Activated B cell treated with CpG ODN at 0.5 μM for 24 hours (primary cell): ENCODE measurements at regions of chr6 and their contacts with region 1.

Region 1: GRCh38 chr6:167826230-167826895 is 348 bp upstream of the AFDN start:
- DNase-seq: no peak
- ATAC-seq: peak; percentile 88
- H3K4me3 Mint-ChIP-seq: peak overlapping the region; percentile 88
- H3K27ac Mint-ChIP-seq: no peak overlapping the region
- H3K4me1 Mint-ChIP-seq: peaks cover 24% of the 10 kb centered on the region
- H3K27me3 Mint-ChIP-seq: peaks cover 26% of the 10 kb centered on the region
- CTCF ChIP-seq: no peak

Region 2: GRCh38 chr6:167163476-167164011 is 662.8 kb before region 1 on chr6:
- CTCF ChIA-PET with region 1: no interaction called
- POLR2A ChIA-PET with region 1: no interaction called
- intact Hi-C with region 1: loop called (anchors 5 kb)
- DNase-seq: no peak
- ATAC-seq: no peak
- H3K4me3 Mint-ChIP-seq: no peak overlapping the region
- H3K27ac Mint-ChIP-seq: no peak overlapping the region
- H3K4me1 Mint-ChIP-seq: peaks cover 3% of the 10 kb centered on the region
- H3K27me3 Mint-ChIP-seq: no peaks in the 10 kb centered on the region
- CTCF ChIP-seq: no peak

Region 3: DNA sequence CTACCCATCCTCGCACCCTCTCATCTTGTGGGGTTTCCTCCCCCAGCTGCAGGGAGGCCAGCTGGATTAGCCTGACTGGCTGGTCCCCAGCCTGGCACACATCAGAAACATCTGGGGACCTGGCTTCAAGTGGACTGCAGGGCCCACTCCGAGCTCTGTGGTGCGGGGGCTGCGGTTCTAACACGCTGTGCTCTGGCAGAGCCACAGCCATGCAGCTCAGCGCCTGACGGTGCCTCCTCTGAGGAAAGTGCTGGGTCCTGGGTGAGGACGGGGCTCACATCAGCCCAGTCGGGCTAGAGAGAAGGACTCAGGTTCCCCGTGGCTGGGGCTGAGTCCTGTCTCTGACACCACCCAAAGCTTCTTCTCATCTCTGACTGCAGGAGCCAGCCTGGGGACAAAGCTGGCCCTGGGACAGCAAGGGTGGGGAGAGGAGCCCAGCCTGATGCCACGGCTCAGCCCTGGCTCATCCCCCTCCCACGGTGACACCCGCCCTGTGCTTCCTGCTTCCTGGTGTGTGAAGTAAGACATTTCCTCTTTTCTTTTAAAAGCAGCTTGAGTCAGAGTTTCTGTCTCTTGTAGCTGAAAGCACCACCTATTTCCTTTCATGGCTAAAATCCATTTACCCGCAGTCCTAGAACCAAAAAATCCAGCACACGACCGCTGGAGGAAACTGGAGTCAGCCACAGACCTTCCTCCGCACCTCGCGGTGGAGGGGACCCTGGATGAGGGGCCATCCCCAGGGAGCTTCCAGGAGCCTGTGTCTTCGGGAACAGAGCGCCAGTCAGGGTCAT is 127.0 kb before region 1 on chr6:
- CTCF ChIA-PET with region 1: interaction called, 3 read pairs
- POLR2A ChIA-PET with region 1: no interaction called
- intact Hi-C with region 1: loop called (anchors 2 kb)
- DNase-seq: peak; percentile 57
- ATAC-seq: peak; percentile 95
- H3K4me3 Mint-ChIP-seq: peak overlapping the region; percentile 86
- H3K27ac Mint-ChIP-seq: peak overlapping the region; percentile 96
- H3K4me1 Mint-ChIP-seq: peaks cover 24% of the 10 kb centered on the region
- H3K27me3 Mint-ChIP-seq: peaks cover 3% of the 10 kb centered on the region
- CTCF ChIP-seq: no peak

Region 4: DNA sequence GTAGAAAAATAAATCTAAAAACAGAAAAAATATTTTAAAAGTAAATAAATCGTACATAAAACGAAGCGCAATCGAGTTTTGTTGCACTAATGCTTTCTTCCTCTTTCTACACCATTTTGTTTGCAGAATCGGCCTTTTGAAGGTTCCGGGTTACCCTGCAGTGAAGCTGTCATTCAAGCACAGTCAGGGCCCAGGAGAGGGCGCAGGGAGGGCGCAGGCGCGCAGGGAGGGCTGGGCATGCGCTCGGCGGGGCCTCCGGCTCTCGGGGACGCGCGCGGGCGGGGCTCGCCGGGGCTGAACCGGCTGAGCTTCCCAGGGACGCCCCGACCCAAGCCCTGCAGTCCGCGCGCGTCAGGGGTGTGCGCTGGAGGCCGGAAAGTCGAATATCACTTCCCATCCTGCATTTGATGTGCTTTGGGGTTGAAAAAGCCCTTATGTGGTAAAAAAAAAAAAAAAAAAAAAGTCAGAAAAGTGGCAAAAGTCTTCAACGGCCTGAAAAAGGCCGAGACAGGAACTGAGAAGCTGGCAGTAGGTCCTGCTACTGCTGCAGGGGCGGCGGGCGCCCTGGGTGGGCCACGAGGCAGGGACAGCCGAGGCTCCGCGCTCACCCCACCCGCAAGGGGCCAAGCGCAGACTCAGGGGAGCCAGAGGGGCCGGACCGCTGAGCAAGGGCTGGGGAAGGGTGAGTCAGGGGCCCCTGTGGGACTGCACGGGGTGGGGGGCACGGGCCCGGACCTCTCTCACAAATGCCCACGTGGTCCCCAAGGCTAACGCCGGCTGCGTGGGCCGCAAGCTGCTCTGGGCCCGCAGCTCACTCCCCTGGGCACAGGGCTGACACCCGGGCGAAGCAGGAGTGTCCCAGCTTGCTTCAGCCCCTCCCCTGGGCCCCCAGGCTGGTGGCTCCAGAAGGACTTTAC is 1386.8 kb after region 1 on chr6:
- CTCF ChIA-PET with region 1: no interaction called
- POLR2A ChIA-PET with region 1: no interaction called
- intact Hi-C with region 1: loop called (anchors 10 kb)
- DNase-seq: peak; percentile 82
- ATAC-seq: peak; percentile 98
- H3K4me3 Mint-ChIP-seq: peak overlapping the region; percentile 69
- H3K27ac Mint-ChIP-seq: peak overlapping the region; percentile 68
- H3K4me1 Mint-ChIP-seq: peaks cover 2% of the 10 kb centered on the region
- H3K27me3 Mint-ChIP-seq: no peaks in the 10 kb centered on the region
- CTCF ChIP-seq: no peak